Dendritic cell treated with granulocyte-macrophage colony-stimulating factor and Interleukin-4, amounts not matched to agents 40 ng/mL and 50 ng/mL, for 4 days (primary cell): ENCODE measurements at regions of chr18 and their contacts with region 1.

Region 1: GRCh38 chr18:46226461-46226860 is 122.3 kb downstream of the HAUS1 start:
- H3K4me3 Mint-ChIP-seq: no peak overlapping the region
- H3K27ac Mint-ChIP-seq: no peak overlapping the region
- H3K4me1 Mint-ChIP-seq: peaks cover 11% of the 10 kb centered on the region
- H3K27me3 Mint-ChIP-seq: no peaks in the 10 kb centered on the region

Region 2: GRCh38 chr18:46182633-46183358 is 43.7 kb before region 1 on chr18:
- intact Hi-C with region 1: no loop called
- H3K4me3 Mint-ChIP-seq: no peak overlapping the region
- H3K27ac Mint-ChIP-seq: peak overlapping the region; percentile 32
- H3K4me1 Mint-ChIP-seq: peaks cover 40% of the 10 kb centered on the region
- H3K27me3 Mint-ChIP-seq: no peaks in the 10 kb centered on the region

Region 3: DNA sequence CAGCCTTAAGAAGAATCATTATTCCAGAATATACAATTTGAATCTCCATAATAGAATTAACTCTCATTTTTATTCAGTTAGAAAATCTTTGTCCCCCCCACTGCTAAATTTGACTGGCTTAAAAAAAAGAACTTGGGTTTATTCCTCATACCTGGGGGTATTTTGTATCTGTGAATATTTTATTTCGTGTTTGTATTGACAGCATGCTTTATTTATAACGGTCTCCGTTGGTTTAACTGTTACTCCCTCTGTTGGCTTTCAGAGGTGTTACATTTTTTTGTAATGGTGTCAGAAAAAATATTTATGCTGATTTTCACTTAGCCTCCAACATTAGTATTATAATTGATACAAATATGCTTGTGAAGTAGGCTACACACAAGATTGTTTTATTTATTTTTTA is 13.2 kb before region 1 on chr18:
- intact Hi-C with region 1: loop called (anchors 1 kb)
- H3K4me3 Mint-ChIP-seq: no peak overlapping the region
- H3K27ac Mint-ChIP-seq: no peak overlapping the region
- H3K4me1 Mint-ChIP-seq: peaks cover 42% of the 10 kb centered on the region
- H3K27me3 Mint-ChIP-seq: no peaks in the 10 kb centered on the region

Region 4: GRCh38 chr18:46297621-46298020 is 71.2 kb after region 1 on chr18:
- intact Hi-C with region 1: no loop called
- H3K4me3 Mint-ChIP-seq: no peak overlapping the region
- H3K27ac Mint-ChIP-seq: no peak overlapping the region
- H3K4me1 Mint-ChIP-seq: peaks cover 8% of the 10 kb centered on the region
- H3K27me3 Mint-ChIP-seq: peaks cover 5% of the 10 kb centered on the region